Activated CD4-positive, alpha-beta T cell treated with anti-CD3 and anti-CD28 coated beads, Interleukin-2, amount 10 ng/mL, durations not matched to agents 7 days and 5 days (primary cell): ENCODE measurements at regions of chr22 and their contacts with region 1.

Region 1: GRCh38 chr22:42444077-42444904 is 12.1 kb upstream of the NFAM1 start:
- DNase-seq: peak; percentile 86
- H3K4me3 Mint-ChIP-seq: peak overlapping the region; percentile 64
- H3K27ac Mint-ChIP-seq: peak overlapping the region; percentile 91
- H3K4me1 Mint-ChIP-seq: peaks cover 32% of the 10 kb centered on the region
- H3K27me3 Mint-ChIP-seq: no peaks in the 10 kb centered on the region

Region 2: DNA sequence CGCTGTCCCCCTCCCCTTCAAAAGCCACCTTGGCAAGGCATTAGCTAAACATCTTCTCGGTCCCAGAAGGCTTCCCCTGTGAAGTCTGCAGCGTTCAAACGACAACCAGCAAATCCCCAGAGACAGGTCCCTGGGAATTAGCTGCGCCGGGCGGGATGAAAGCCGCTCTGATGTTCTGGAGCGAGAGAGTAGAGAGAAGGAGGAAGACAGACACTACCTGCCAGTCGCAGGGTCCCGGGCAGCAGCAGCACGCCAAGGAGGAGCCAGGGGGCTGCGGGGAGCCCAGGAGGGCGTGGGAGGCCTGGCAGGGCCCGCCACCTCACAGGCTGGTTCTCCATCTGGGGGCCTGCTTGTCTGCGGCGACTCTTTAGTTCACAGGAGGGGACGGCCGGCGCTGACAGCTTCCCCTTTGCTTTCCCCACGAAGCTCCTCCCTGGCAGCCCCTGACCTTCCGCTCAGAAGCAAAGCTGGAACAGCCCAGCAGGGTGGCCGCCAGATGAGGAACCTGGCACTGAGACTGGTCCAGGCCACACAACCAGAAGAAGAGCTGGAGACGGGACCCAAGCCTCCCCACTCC is 12.2 kb before region 1 on chr22 and contains the start of gene NFAM1:
- CTCF ChIA-PET with region 1: interaction called, 13 read pairs
- POLR2A ChIA-PET with region 1: no interaction called
- DNase-seq: no peak
- H3K4me3 Mint-ChIP-seq: no peak within 1 kb of the TSS
- H3K27ac Mint-ChIP-seq: no peak within 1 kb of the TSS
- H3K4me1 Mint-ChIP-seq: peaks cover 2% of the 10 kb centered on the region
- H3K27me3 Mint-ChIP-seq: peaks cover 24% of the 10 kb centered on the region
- total RNA-seq, gene NFAM1: 0.02 to 0.04 TPM

Region 3: GRCh38 chr22:42462016-42462415 is 17.7 kb after region 1 on chr22:
- CTCF ChIA-PET with region 1: interaction called, 10 read pairs
- POLR2A ChIA-PET with region 1: interaction called, 14 read pairs
- DNase-seq: no peak
- H3K4me3 Mint-ChIP-seq: no peak overlapping the region
- H3K27ac Mint-ChIP-seq: no peak overlapping the region
- H3K4me1 Mint-ChIP-seq: peaks cover 4% of the 10 kb centered on the region
- H3K27me3 Mint-ChIP-seq: peaks cover 21% of the 10 kb centered on the region